Stomach (tissue), 19 donors: ENCODE measurements at regions of chr3 and their contacts with region 1.

Region 1: GRCh38 chr3:87696124-87697013 is 362.4 kb downstream of the CGGBP1 start:
- DNase-seq: no peak
- H3K4me3 ChIP-seq: no peak overlapping the region
- H3K27ac ChIP-seq: no peak overlapping the region
- H3K4me1 ChIP-seq: no peaks in the 10 kb centered on the region
- H3K27me3 ChIP-seq: no peaks in the 10 kb centered on the region
- CTCF ChIP-seq: no peak
- EP300 ChIP-seq: no peak
- POLR2A ChIP-seq: no peak

Region 2: GRCh38 chr3:87575553-87575952 is 120.8 kb before region 1 on chr3:
- intact Hi-C with region 1: loop called (anchors 5 kb)
- DNase-seq: no peak
- H3K4me3 ChIP-seq: no peak overlapping the region
- H3K27ac ChIP-seq: no peak overlapping the region
- H3K4me1 ChIP-seq: no peaks in the 10 kb centered on the region
- H3K27me3 ChIP-seq: no peaks in the 10 kb centered on the region
- CTCF ChIP-seq: no peak
- EP300 ChIP-seq: no peak
- POLR2A ChIP-seq: no peak

Region 3: GRCh38 chr3:87771341-87772192 is 75.2 kb after region 1 on chr3:
- intact Hi-C with region 1: no loop called
- DNase-seq: peak in 1 of 2 donors; percentile 46
- H3K4me3 ChIP-seq: no peak overlapping the region
- H3K27ac ChIP-seq: no peak overlapping the region
- H3K4me1 ChIP-seq: no peaks in the 10 kb centered on the region
- H3K27me3 ChIP-seq: no peaks in the 10 kb centered on the region
- CTCF ChIP-seq: peak in 5 of 7 experiments; percentile 20 to 48 (median 39)
- EP300 ChIP-seq: no peak
- POLR2A ChIP-seq: no peak

Region 4: GRCh38 chr3:87828046-87828445 is 131.7 kb after region 1 on chr3:
- intact Hi-C with region 1: no loop called
- DNase-seq: no peak
- H3K4me3 ChIP-seq: no peak overlapping the region
- H3K27ac ChIP-seq: no peak overlapping the region
- H3K4me1 ChIP-seq: no peaks in the 10 kb centered on the region
- H3K27me3 ChIP-seq: no peaks in the 10 kb centered on the region
- CTCF ChIP-seq: no peak
- EP300 ChIP-seq: no peak
- POLR2A ChIP-seq: no peak